ENCODE measurements at regions of chr3 and their contacts with region 1.

Region 1: GRCh38 chr3:139935016-139935865 is at the start of gene CLSTN2:
- DNase-seq: peak; percentile 83
- total RNA-seq, gene CLSTN2: 3.9 TPM

Region 2: GRCh38 chr3:138381950-138382688 is 1553.1 kb before region 1 on chr3:
- intact Hi-C with region 1: no loop called
- DNase-seq: no peak

Region 3: DNA sequence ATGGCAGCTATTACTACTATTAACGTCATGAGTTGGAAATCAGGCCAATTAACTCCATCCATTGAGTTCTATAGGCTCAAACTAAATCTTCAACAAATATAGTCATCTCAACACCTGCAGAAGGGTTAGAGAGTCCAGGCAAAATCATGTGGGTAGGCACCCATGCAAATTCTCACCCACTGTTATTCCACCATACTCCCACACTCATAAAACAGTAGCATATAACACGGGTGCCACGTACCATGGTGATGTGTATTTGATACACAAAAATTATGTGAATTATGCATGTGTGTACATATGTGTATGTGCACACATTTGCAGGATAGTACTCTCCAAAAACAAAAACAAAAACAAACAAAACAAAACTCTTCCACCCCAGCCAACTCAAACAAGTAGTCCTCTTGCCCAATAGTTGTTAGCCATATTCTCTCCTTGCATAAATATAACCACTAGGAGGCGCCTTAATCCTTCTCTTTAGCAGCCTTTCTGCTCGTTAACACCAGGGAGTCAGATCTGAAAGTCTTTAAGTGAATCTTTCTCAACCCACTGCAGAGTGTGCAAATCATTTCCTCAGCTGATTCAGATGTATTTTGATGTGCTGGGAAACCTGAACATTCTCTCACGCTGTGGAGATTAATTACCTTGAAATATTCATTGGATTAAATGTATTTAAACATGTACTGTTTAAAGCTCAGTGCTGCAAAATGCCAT is 507.8 kb before region 1 on chr3:
- intact Hi-C with region 1: loop called (anchors 5 kb)
- DNase-seq: no peak

Region 4: GRCh38 chr3:139588450-139588849 is 346.8 kb before region 1 on chr3:
- intact Hi-C with region 1: loop called (anchors 2 kb)
- DNase-seq: no peak

Region 5: GRCh38 chr3:139718415-139718814 is 216.8 kb before region 1 on chr3:
- intact Hi-C with region 1: loop called (anchors 1 kb)
- DNase-seq: no peak

Region 6: DNA sequence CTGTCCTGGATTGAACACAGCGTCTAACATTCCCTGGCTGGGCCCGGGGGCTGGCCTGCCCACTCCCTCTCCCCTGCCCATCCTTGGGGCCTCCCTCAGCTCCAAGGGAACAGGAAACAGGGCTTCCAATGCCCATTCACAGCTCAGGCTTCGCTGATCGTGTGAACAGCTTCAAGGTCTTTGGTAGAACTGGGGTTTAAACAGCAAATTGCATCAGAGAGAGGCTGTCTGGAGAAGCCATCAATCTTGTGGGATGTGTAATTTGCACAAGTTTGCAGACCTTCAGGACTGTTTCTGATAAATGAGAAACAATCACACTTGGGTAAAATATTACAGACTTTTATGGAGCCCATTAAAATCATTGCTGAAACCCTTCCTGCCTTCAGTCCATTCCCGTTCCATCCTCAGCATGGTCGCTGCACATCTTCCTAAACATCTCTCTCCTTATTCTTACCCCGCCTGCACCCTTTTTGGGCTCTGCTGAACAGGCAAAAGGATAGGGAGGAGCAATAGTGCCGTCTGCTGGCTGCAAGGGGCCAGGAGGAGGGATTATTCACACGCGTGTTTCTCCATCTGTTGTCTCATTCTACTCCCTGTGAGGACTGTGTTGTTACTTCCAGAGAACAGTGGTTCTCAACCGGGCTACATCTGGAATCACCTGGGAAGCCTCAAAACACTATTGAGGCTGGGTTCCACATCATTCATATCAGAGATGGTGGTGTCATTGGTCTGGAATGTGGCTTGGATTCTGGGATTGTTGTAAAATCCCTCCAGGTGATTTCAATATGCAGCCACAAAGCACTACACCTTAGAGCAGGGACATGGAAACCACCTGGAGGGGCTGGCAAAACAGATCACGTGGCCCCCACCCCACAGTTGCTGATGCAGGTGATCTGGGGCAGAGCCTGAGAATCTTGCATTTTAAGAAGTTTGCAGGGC is 116.0 kb after region 1 on chr3:
- intact Hi-C with region 1: loop called (anchors 5 kb)
- DNase-seq: no peak

Region 7: DNA sequence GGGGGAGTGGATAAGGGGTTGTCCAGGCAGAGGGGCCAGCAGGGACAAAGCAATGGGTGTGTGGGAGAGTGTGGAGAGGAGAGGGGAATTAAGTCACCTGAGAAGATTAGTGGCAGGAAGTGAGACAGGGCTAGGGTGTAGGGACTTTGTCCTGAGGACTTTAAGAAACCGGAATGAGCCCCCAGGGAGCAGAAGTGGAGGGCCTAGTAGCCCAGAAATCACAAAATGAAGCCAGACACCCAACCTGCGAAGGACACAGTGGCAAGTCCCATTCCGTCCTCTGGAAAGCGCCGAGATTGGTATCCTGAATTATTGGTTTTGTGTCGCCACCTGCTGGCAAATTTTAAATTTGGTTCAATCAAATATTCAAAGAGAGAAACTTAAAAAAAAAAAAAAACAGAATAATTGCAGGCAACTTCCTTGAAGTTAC is 928.4 kb after region 1 on chr3:
- intact Hi-C with region 1: loop called (anchors 5 kb)
- DNase-seq: no peak